T-cell (primary cell): ENCODE measurements at regions of chr10 and their contacts with region 1.

Region 1: GRCh38 chr10:122980209-122981065 is at the start of gene PSTK:
- DNase-seq: peak; percentile 70 to 95 (median 80)
- ATAC-seq: peak; percentile 94 to 99 (median 98)
- H3K4me3 ChIP-seq: peak within 1 kb of the TSS; percentile 81 to 92
- H3K4me3 Mint-ChIP-seq: peak within 1 kb of the TSS; percentile 87 to 90 (median 90)
- H3K27ac ChIP-seq: peak within 1 kb of the TSS; percentile 94
- H3K27ac Mint-ChIP-seq: peak within 1 kb of the TSS; percentile 92
- H3K4me1 ChIP-seq: peaks cover 10 to 14% of the 10 kb centered on the region in 2 experiments
- H3K4me1 Mint-ChIP-seq: peaks cover 16 to 24% (median 22%) of the 10 kb centered on the region in 3 donors
- H3K27me3 ChIP-seq: no peaks in the 10 kb centered on the region
- H3K27me3 Mint-ChIP-seq: no peaks in the 10 kb centered on the region
- total RNA-seq, gene PSTK: 3.7 to 12.1 (median 5.2) TPM

Region 2: GRCh38 chr10:122968698-122969097 is 11.7 kb before region 1 on chr10:
- CTCF ChIA-PET with region 1: no interaction called
- POLR2A ChIA-PET with region 1: no interaction called
- DNase-seq: no peak
- ATAC-seq: no peak
- H3K4me3 ChIP-seq: no peak overlapping the region
- H3K4me3 Mint-ChIP-seq: no peak overlapping the region
- H3K27ac ChIP-seq: no peak overlapping the region
- H3K27ac Mint-ChIP-seq: no peak overlapping the region
- H3K4me1 ChIP-seq: no peaks in the 10 kb centered on the region
- H3K4me1 Mint-ChIP-seq: no peaks in the 10 kb centered on the region
- H3K27me3 ChIP-seq: peaks cover 0 to 12% of the 10 kb centered on the region in 2 experiments
- H3K27me3 Mint-ChIP-seq: peaks cover 13 to 18% of the 10 kb centered on the region in 2 donors

Region 3: DNA sequence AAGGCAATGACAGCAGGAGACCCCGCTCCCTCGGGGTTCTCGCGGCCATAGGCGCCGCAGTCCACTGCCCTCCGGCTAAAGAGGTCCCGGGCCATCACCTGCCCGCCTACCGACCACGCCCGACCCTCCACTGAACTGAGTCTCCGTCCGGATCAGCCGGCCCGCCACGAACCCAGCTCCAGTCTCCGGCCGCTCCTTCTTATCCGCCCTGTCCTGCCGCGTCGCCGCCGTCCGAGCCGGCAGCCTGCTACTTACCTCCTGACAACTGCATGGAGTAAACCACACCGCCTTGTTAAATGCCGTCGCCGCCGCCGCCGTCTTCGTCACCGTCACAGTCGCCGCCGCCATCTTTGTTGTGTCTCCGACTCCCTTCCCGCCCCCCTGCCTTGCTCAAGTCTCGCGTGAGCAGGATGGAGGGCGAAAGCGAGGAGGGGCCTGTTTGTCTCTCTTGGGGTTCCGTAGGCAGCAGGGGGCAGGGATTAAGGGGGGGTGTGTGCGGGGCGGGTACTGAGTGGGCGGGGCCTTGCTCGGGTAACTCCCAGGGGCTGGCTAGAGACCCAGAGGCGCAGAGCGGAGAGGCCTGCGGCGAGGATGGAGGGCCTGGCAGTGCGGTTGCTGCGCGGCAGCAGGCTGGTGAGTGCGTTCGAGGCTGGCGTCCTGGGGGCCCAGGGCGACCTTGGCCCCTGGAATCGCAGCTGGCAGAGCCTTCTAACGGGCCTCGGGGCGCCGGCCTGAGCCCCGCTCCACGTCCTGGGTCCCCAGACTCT is 28.2 kb after region 1 on chr10 and contains the starts of genes ACADSB and IKZF5:
- CTCF ChIA-PET with region 1: interaction called, 5 to 18 read pairs
- POLR2A ChIA-PET with region 1: interaction called, 4 to 10 read pairs
- DNase-seq: peak; percentile 88 to 98 (median 96)
- ATAC-seq: peak; percentile 87 to 93 (median 89)
- H3K4me3 ChIP-seq: peak within 1 kb of the TSS; percentile 77 to 89
- H3K4me3 Mint-ChIP-seq: peak within 1 kb of the TSS; percentile 94 to 99 (median 99)
- H3K27ac ChIP-seq: peak within 1 kb of the TSS; percentile 95
- H3K27ac Mint-ChIP-seq: peak within 1 kb of the TSS; percentile 99
- H3K4me1 ChIP-seq: peaks cover 17 to 19% of the 10 kb centered on the region in 2 experiments
- H3K4me1 Mint-ChIP-seq: peaks cover 62 to 66% (median 62%) of the 10 kb centered on the region in 3 donors
- H3K27me3 ChIP-seq: no peaks in the 10 kb centered on the region
- H3K27me3 Mint-ChIP-seq: no peaks in the 10 kb centered on the region
- total RNA-seq, gene ACADSB: 25.3 to 33.8 (median 33.0) TPM
- total RNA-seq, gene IKZF5: 22.6 to 68.1 (median 29.4) TPM

Region 4: DNA sequence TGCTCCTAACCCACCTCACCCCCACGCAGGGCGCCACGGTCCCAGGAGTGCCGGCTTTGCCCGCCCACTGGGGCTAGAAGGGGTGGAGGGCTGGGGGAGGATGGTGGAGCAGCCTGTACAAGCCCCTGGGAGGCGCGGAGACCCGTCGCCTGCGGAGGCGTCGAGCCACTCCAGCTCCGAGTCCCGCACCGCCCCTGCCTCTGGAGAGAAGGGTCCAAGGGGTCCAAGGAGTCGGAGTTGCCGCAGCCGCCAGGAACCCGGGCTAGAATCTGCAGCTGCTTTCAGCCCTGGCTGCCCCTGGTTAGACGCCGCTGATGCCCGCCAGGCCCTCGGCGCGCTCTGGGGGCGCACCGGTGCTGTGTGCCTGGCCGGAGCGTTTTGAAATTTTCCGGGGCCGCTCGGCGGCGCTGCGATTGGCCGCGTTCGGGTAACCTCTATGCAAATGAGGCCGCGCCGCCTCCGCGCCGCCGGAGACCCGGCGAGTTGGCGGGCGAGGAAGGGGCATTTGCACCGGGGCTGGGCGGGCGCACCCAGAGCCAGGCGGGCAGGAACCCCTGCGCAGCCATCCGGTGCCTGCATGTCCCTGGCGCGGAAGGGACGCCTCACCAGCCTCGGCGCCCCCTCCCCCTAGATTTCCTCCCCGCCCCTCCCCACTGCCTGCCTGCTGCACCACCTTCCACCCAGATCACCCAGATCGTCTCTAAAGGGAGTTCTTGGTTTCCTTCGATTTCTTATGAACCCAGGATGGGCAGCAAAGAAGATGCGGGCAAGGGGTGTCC is 167.4 kb after region 1 on chr10 and contains the start of gene HMX2:
- CTCF ChIA-PET with region 1: no interaction called
- POLR2A ChIA-PET with region 1: no interaction called
- DNase-seq: peak in 3 of 35 experiments; percentile 28 to 50 (median 33)
- ATAC-seq: peak; percentile 27 to 52 (median 28)
- H3K4me3 ChIP-seq: peak within 1 kb of the TSS; percentile 26 to 65
- H3K4me3 Mint-ChIP-seq: peak within 1 kb of the TSS; percentile 52 to 77 (median 73)
- H3K27ac ChIP-seq: no peak within 1 kb of the TSS
- H3K27ac Mint-ChIP-seq: peak within 1 kb of the TSS in 1 of 2 donors; percentile 69
- H3K4me1 ChIP-seq: peaks cover 22 to 82% of the 10 kb centered on the region in 2 experiments
- H3K4me1 Mint-ChIP-seq: peaks cover 52 to 69% (median 64%) of the 10 kb centered on the region in 3 donors
- H3K27me3 ChIP-seq: peaks cover 18 to 88% of the 10 kb centered on the region in 2 experiments
- H3K27me3 Mint-ChIP-seq: peaks cover 48 to 76% of the 10 kb centered on the region in 2 donors
- total RNA-seq, gene HMX2: not detected